CD14-positive monocyte (primary cell): ENCODE measurements at regions of chr15 and their contacts with region 1.

Region 1: DNA sequence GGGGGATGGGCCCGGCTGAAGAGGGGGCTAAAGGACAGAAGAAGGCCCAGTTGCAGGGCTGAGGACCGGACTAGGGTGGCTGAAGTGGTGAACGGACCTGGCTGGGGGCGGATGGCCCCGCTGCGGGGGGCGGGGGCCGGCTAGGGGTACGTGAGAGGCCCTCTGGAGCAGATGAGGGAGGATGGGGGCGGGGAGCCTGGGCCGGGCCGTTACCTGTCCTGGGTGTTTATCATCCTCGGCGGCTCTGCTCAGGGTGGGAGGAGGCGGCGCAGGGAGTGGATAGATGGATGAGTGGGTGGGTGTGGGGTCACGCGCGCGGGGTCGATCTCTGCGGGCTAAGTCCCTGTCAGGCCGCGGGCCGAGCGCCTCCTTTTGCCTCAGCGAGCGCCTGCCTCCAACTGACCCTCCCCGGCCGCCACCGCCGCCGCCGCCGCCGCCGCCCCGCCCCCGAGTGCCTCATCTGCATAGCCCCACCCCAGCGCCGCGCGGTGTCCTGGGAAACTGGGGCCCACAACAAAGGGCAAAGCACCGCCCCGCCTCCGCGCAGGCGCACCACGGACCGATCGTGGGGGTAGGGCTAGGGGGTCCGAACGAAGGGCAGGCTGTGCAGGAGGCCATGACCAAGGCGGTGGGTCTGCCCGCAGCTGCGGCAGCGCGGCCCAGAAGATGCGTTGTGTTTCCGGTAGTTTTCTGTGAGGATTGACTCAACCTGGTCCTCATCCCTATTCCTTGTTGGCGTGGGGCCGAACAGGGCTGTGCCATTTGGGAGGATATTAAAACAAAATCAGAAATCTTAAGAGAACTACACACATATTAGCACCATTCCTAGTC is 72.4 kb downstream of the RBPMS2 start:
- DNase-seq: peak; percentile 83 to 89 (median 87)
- H3K4me3 ChIP-seq: peak overlapping the region; percentile 83 to 99 (median 95)
- H3K4me3 Mint-ChIP-seq: peak overlapping the region; percentile 89 to 95
- H3K27ac ChIP-seq: peak overlapping the region; percentile 75 to 91
- H3K27ac Mint-ChIP-seq: peak overlapping the region; percentile 80 to 96 (median 93)
- H3K4me1 ChIP-seq: peaks cover 40 to 51% of the 10 kb centered on the region in 2 donors
- H3K4me1 Mint-ChIP-seq: peaks cover 50% of the 10 kb centered on the region
- H3K27me3 ChIP-seq: no peaks in the 10 kb centered on the region
- H3K27me3 Mint-ChIP-seq: peaks cover 0 to 2% (median 0%) of the 10 kb centered on the region in 3 donors
- CTCF ChIP-seq: no peak

Region 2: GRCh38 chr15:64611085-64611725 is 91.8 kb before region 1 on chr15:
- intact Hi-C with region 1: no loop called
- DNase-seq: no peak
- H3K4me3 ChIP-seq: no peak overlapping the region
- H3K4me3 Mint-ChIP-seq: no peak overlapping the region
- H3K27ac ChIP-seq: peak overlapping the region in 1 of 2 donors; percentile 65
- H3K27ac Mint-ChIP-seq: peak overlapping the region in 4 of 7 donors; percentile 28 to 68 (median 47)
- H3K4me1 ChIP-seq: no peaks in the 10 kb centered on the region
- H3K4me1 Mint-ChIP-seq: peaks cover 13% of the 10 kb centered on the region
- H3K27me3 ChIP-seq: no peaks in the 10 kb centered on the region
- H3K27me3 Mint-ChIP-seq: peaks cover 0 to 1% (median 0%) of the 10 kb centered on the region in 3 donors
- CTCF ChIP-seq: no peak

Region 3: DNA sequence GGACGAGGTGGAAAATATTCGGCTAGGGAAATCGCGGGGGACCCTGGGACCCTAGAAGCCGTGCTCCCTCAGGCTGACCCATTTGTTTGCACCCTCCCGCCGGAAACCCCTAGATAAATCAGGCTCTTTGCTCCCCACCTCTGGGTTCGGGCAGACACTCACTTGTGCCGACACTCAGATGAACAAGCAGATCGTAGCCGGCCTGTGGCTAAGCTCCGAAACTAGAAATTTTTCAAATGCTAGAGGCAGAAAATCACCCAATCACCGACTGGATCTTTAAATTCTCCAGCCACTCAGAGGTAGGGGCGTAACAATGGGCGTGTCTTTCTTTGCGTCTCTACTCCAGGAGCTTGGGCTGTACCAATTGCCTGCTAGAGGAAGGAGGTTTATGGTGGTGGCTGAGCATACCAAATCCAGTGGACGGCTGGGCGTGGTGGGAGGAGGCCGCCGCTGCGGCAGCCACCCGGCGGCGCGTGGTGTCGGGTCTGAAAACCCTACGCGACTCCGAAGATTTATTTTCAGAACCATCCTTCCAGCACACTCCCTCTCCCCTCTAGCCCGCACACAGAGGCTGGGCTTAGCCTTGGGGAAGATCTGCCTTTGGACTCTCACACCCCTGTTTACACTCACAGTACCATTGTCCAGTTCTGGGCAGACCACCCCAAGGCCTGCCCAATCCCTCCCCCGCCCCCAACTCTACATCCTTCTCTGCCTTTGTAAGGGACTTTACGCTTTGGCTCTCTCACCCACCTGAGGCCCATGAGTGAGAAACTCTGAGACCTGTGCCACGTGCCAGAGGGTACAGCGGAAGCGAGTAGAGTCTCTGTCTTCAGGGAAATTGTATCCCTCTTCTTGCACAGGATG is 122.6 kb after region 1 on chr15 and contains the start of gene PIF1:
- intact Hi-C with region 1: loop called (anchors 10 kb)
- DNase-seq: peak; percentile 95 to 98 (median 95)
- H3K4me3 ChIP-seq: peak within 1 kb of the TSS; percentile 32 to 77 (median 53)
- H3K4me3 Mint-ChIP-seq: peak within 1 kb of the TSS; percentile 80 to 94
- H3K27ac ChIP-seq: peak within 1 kb of the TSS in 1 of 2 donors; percentile 6
- H3K27ac Mint-ChIP-seq: peak within 1 kb of the TSS; percentile 41 to 92 (median 77)
- H3K4me1 ChIP-seq: peaks cover 24 to 29% of the 10 kb centered on the region in 2 donors
- H3K4me1 Mint-ChIP-seq: peaks cover 35% of the 10 kb centered on the region
- H3K27me3 ChIP-seq: peaks cover 4 to 16% of the 10 kb centered on the region in 2 donors
- H3K27me3 Mint-ChIP-seq: peaks cover 8 to 18% (median 17%) of the 10 kb centered on the region in 3 donors
- CTCF ChIP-seq: no peak
- polyA plus RNA-seq, gene PIF1: 0.13 to 0.43 TPM in 2 of 3 donors, not detected in the other

Region 4: DNA sequence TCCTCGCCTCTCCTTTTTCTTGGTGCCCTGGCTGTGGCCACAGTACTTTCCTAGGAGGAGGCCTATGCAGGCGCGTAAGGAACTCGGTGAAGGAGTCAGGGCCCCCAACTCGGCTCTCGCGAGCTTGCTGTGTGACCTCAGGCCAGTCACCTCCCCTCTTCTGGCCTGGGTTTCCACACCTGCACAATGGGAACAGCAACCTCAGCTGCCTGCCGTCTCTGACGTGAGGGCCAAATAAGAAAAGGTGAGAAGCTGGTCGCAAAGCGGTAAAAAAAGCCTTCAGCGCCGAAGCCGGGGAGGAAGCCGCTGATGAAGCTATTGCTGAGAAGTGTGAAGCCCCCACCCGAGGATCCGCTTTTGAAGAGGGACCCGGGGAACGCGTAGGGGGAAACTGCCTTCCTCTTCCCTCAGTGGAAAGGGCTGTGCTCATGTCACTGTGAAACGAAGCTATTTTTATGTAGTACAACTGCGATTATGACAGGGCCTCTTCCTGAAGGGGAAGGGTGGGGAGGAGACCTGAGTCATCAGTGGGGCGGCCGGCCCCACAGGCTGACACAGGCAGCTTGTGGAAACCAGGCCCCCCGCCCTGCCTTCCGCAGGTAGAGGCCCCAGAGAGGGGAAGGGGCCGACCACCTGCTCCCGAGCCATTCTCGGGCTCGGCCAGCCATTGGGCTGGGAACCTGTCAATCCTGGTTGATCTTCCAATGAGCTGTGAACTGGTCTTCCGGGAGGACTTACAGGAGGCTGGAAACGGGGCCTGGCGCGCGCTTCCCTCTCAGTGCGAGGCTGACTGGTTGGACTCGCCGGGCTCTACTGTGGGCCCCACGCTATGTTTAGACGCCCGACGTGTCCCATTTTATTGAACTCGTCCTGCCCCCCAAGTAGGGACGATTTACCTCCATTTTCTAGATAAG is 190.7 kb after region 1 on chr15:
- intact Hi-C with region 1: loop called in 1 of 2 experiments (anchors 10 kb)
- DNase-seq: peak; percentile 97 to 98 (median 97)
- H3K4me3 ChIP-seq: peak overlapping the region in 2 of 3 experiments; percentile 15 to 66
- H3K4me3 Mint-ChIP-seq: peak overlapping the region; percentile 77 to 86
- H3K27ac ChIP-seq: peak overlapping the region; percentile 99
- H3K27ac Mint-ChIP-seq: peak overlapping the region; percentile 99 to 100 (median 100)
- H3K4me1 ChIP-seq: peaks cover 78 to 80% of the 10 kb centered on the region in 2 donors
- H3K4me1 Mint-ChIP-seq: peaks cover 76% of the 10 kb centered on the region
- H3K27me3 ChIP-seq: no peaks in the 10 kb centered on the region
- H3K27me3 Mint-ChIP-seq: no peaks in the 10 kb centered on the region
- CTCF ChIP-seq: no peak